ENCODE measurements at regions of chr15 and their contacts with region 1.

Region 1: DNA sequence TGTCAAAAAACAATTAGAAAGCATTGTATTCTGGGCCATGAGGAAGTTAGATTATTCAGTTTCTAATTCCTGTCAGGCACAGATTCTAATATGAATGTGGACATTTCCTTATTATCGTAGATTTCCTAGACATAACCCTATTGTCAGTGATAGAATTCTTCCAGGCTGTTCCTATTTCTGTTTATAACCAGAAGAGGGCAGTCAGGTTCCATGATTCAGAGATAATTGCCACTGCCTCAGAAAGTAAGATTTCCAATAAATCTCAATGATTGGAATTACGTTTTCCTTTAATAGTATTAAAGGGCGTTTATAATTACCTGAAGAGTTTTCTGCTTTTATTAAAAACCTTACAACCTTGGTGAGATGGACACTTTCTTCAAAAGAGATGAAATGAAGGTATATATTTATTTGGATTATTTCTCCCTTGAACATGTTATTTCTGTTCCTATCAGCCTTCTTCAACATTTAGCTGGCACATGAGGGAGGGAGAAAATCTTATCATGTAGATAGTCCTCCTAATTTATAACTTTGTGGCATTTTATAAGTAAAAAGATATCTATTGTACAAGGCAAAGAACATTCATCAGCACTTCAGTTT is 439.2 kb downstream of the MCTP2 start:
- DNase-seq: peak; percentile 15
- ATAC-seq: peak; percentile 75
- H3K4me3 ChIP-seq: no peak overlapping the region
- H3K27ac ChIP-seq: no peak overlapping the region
- H3K4me1 ChIP-seq: no peaks in the 10 kb centered on the region
- H3K27me3 ChIP-seq: peaks cover 7% of the 10 kb centered on the region; the same call in 1 of the 2 replicates
- CTCF ChIP-seq: peak; percentile 48 to 79 (median 56); a peak in 5 of 6 replicates
- POLR2A ChIP-seq: no peak
- RAD21 ChIP-seq: peak; percentile 75

Region 2: DNA sequence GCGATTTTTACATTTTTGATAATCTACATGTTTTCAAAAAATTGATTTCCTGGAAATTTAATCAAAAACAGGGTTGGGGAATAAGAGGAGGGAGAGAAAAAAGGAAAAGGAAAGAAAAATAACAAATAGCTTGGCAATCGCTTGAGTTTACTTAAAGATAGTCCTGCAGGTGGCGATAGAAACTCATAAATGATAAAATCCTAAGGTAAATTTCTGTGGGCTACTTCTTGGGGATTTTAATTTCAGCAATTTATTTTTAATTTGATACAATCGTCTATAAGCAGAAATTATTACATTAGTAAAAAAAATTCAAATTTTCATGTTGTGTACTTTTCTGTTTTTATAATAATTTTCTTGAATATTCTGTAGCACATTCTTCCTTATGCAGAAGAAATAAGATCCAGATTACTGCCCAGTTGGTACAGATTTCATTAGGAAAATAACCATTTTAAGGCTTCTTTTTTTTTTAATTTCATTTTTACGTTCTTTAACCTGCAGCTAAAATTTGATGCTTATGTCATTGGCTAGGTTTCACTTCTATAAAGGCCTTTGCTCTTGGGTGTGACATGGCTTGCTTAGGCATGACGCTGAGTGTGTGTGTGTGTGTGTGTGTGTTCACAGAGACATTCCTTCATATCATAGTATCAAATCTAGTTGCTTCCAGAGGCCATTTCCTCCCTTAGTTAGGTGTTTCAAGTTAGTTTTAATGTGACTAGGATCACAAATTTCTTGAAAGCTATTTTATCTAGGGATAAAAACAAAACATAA is 257.4 kb before region 1 on chr15:
- CTCF ChIA-PET with region 1: interaction called, 7 read pairs
- POLR2A ChIA-PET with region 1: no interaction called
- RAD21 ChIA-PET with region 1: no interaction called
- intact Hi-C with region 1: loop called (anchors 5 kb)
- DNase-seq: peak; percentile 6
- ATAC-seq: no peak
- H3K4me3 ChIP-seq: no peak overlapping the region
- H3K27ac ChIP-seq: no peak overlapping the region
- H3K4me1 ChIP-seq: no peaks in the 10 kb centered on the region
- H3K27me3 ChIP-seq: no peaks in the 10 kb centered on the region
- CTCF ChIP-seq: peak; percentile 16 to 59 (median 42); a peak in 4 of 6 replicates
- POLR2A ChIP-seq: no peak
- RAD21 ChIP-seq: peak; percentile 44; the same call in 1 of the 2 replicates

Region 3: DNA sequence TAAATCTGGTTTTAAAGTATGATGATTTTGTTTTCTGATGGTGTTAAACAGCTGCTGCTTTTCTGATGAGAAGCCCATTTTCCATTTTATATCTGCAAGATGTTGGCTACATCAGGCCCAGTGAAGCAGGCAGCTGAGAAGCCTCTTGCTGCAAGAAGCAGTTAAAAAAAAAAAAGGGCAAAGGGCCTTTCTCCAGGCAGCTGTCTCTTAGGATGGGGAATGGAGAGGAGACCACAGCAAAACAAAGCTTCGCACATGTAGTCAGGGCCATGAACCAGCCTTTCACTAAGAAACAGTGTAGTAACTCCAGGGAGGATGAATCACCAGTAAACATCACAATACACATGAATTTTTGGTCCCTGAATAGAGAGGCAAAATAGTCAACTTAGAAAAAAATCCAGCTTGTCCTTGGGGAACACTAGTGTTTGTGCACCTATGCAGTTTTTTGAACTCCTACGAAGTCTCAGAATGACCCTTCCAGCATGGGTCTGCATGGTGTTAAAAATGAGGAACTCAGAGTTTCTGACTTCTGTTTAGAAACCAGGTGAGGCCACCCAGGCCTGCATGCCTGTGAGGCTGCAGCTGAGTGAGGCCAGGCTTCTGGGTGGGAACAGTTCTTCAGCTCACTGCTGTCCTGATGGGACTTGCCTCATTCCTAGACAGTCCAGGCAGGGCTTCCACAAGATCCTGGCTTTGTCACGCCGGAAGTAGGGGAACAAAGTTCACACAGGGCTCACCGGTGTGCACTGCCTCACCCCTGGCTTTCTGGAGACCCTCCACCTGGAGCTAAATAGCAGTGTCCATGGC is 79.5 kb after region 1 on chr15:
- CTCF ChIA-PET with region 1: no interaction called
- POLR2A ChIA-PET with region 1: no interaction called
- RAD21 ChIA-PET with region 1: no interaction called
- intact Hi-C with region 1: no loop called
- DNase-seq: no peak
- ATAC-seq: no peak
- H3K4me3 ChIP-seq: no peak overlapping the region
- H3K27ac ChIP-seq: no peak overlapping the region
- H3K4me1 ChIP-seq: no peaks in the 10 kb centered on the region
- H3K27me3 ChIP-seq: no peaks in the 10 kb centered on the region
- CTCF ChIP-seq: no peak
- POLR2A ChIP-seq: no peak
- RAD21 ChIP-seq: no peak

Region 4: DNA sequence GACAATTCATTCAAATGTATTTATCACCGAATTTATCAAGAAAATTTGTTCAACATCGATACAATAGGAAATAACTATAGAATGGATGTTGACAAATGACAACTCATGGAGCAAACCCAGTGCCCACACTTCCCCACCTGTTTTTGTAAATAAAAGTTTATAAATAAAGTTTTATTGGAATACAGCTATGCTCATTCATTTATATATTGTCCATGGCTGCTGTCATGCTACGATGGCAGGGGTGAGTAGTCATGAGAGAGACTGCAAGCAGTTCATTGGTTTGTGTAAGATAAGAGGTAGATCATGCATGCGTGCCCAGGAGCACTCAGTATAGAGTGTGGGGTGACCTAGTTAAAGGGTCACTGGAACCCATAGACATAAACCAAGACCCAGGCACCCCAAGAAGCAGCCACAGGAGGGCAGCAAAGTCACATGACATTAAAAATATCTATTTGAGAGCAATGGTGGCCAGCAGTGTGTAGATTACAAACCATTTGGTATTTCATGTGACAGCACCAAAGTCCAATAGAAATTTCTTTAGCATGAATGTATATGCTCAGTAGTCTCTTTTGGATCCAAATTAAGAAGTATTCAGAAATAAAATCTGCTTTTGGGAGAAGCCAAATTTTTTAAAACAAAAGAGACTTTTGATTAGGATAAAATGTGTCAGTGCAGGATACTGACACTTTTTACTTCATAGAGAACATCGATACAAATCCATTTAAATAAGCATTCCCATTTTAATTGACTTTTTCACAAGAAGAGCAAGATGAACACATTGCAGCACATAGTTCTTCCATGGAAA is 355.6 kb after region 1 on chr15:
- CTCF ChIA-PET with region 1: no interaction called
- POLR2A ChIA-PET with region 1: no interaction called
- RAD21 ChIA-PET with region 1: no interaction called
- intact Hi-C with region 1: loop called (anchors 5 kb)
- DNase-seq: peak; percentile 13
- ATAC-seq: peak; percentile 78
- H3K4me3 ChIP-seq: no peak overlapping the region
- H3K27ac ChIP-seq: no peak overlapping the region
- H3K4me1 ChIP-seq: no peaks in the 10 kb centered on the region
- H3K27me3 ChIP-seq: no peaks in the 10 kb centered on the region
- CTCF ChIP-seq: peak; percentile 13 to 61 (median 55); a peak in 4 of 6 replicates
- POLR2A ChIP-seq: no peak
- RAD21 ChIP-seq: peak; percentile 62

Measured in HCT116 (cell line).